T-cell (primary cell): ENCODE measurements at regions of chr2 and their contacts with region 1.

Region 1: GRCh38 chr2:240566203-240567136 is 1.8 kb upstream of the RNPEPL1 start:
- DNase-seq: peak; percentile 86 to 97 (median 93)
- ATAC-seq: peak; percentile 64 to 73 (median 67)
- H3K4me3 ChIP-seq: peak overlapping the region; percentile 82 to 83
- H3K4me3 Mint-ChIP-seq: peak overlapping the region; percentile 87 to 91 (median 91)
- H3K27ac ChIP-seq: peak overlapping the region; percentile 94
- H3K27ac Mint-ChIP-seq: peak overlapping the region; percentile 98 to 99
- H3K4me1 ChIP-seq: peaks cover 50 to 88% of the 10 kb centered on the region in 2 experiments
- H3K4me1 Mint-ChIP-seq: peaks cover 75 to 80% (median 76%) of the 10 kb centered on the region in 3 donors
- H3K27me3 ChIP-seq: peaks cover 0 to 2% of the 10 kb centered on the region in 2 experiments
- H3K27me3 Mint-ChIP-seq: no peaks in the 10 kb centered on the region

Region 2: GRCh38 chr2:240579771-240580614 is 13.5 kb after region 1 on chr2:
- CTCF ChIA-PET with region 1: interaction called in 1 of 2 experiments, 31 read pairs
- POLR2A ChIA-PET with region 1: interaction called in 1 of 2 experiments, 15 read pairs
- DNase-seq: peak; percentile 52 to 89 (median 74)
- ATAC-seq: peak; percentile 86 to 94 (median 90)
- H3K4me3 ChIP-seq: no peak overlapping the region
- H3K4me3 Mint-ChIP-seq: peak overlapping the region in 2 of 3 donors; percentile 2 to 29
- H3K27ac ChIP-seq: peak overlapping the region; percentile 44
- H3K27ac Mint-ChIP-seq: peak overlapping the region; percentile 86 to 88
- H3K4me1 ChIP-seq: peaks cover 12 to 42% of the 10 kb centered on the region in 2 experiments
- H3K4me1 Mint-ChIP-seq: peaks cover 39 to 49% (median 41%) of the 10 kb centered on the region in 3 donors
- H3K27me3 ChIP-seq: no peaks in the 10 kb centered on the region
- H3K27me3 Mint-ChIP-seq: no peaks in the 10 kb centered on the region

Region 3: GRCh38 chr2:240586198-240586918 is 19.9 kb after region 1 on chr2 and contains the start of gene CAPN10:
- CTCF ChIA-PET with region 1: interaction called, 4 to 51 read pairs
- POLR2A ChIA-PET with region 1: interaction called in 1 of 2 experiments, 15 read pairs
- DNase-seq: peak; percentile 91 to 99 (median 95)
- ATAC-seq: peak; percentile 89 to 92 (median 90)
- H3K4me3 ChIP-seq: peak within 1 kb of the TSS; percentile 76 to 96
- H3K4me3 Mint-ChIP-seq: peak within 1 kb of the TSS; percentile 92 to 94 (median 94)
- H3K27ac ChIP-seq: peak within 1 kb of the TSS; percentile 84
- H3K27ac Mint-ChIP-seq: peak within 1 kb of the TSS; percentile 93
- H3K4me1 ChIP-seq: peaks cover 19 to 50% of the 10 kb centered on the region in 2 experiments
- H3K4me1 Mint-ChIP-seq: peaks cover 43 to 61% (median 60%) of the 10 kb centered on the region in 3 donors
- H3K27me3 ChIP-seq: no peaks in the 10 kb centered on the region
- H3K27me3 Mint-ChIP-seq: no peaks in the 10 kb centered on the region
- total RNA-seq, gene CAPN10: 73.3 to 107 (median 96.1) TPM

Region 4: GRCh38 chr2:240622531-240623235 is 56.2 kb after region 1 on chr2:
- CTCF ChIA-PET with region 1: interaction called in 1 of 2 experiments, 15 read pairs
- POLR2A ChIA-PET with region 1: no interaction called
- DNase-seq: peak in 30 of 35 experiments; percentile 23 to 82 (median 62)
- ATAC-seq: peak; percentile 14 to 59 (median 40)
- H3K4me3 ChIP-seq: peak overlapping the region; percentile 11 to 30
- H3K4me3 Mint-ChIP-seq: peak overlapping the region in 2 of 3 donors; percentile 21 to 85
- H3K27ac ChIP-seq: peak overlapping the region; percentile 96
- H3K27ac Mint-ChIP-seq: peak overlapping the region; percentile 88 to 96
- H3K4me1 ChIP-seq: peaks cover 47 to 84% of the 10 kb centered on the region in 2 experiments
- H3K4me1 Mint-ChIP-seq: peaks cover 49 to 61% (median 58%) of the 10 kb centered on the region in 3 donors
- H3K27me3 ChIP-seq: no peaks in the 10 kb centered on the region
- H3K27me3 Mint-ChIP-seq: no peaks in the 10 kb centered on the region